Thyroid gland (tissue), 4 donors: ENCODE measurements at regions of chr2 and their contacts with region 1.

Region 1: GRCh38 chr2:233053928-233054784 is 6.0 kb upstream of the INPP5D start:
- DNase-seq: peak; percentile 52 to 60
- H3K4me3 ChIP-seq: no peak overlapping the region
- H3K27ac ChIP-seq: no peak overlapping the region
- H3K4me1 ChIP-seq: peaks cover 0 to 10% of the 10 kb centered on the region in 2 donors
- H3K27me3 ChIP-seq: no peaks in the 10 kb centered on the region
- CTCF ChIP-seq: peak; percentile 57 to 94 (median 78)
- POLR2A ChIP-seq: no peak

Region 2: GRCh38 chr2:232609607-232610006 is 444.5 kb before region 1 on chr2:
- intact Hi-C with region 1: loop called (anchors 5 kb)
- DNase-seq: no peak
- H3K4me3 ChIP-seq: no peak overlapping the region
- H3K27ac ChIP-seq: no peak overlapping the region
- H3K4me1 ChIP-seq: no peaks in the 10 kb centered on the region
- H3K27me3 ChIP-seq: no peaks in the 10 kb centered on the region
- CTCF ChIP-seq: no peak
- POLR2A ChIP-seq: no peak

Region 3: GRCh38 chr2:233100192-233100998 is 46.2 kb after region 1 on chr2:
- intact Hi-C with region 1: no loop called
- DNase-seq: no peak
- H3K4me3 ChIP-seq: no peak overlapping the region
- H3K27ac ChIP-seq: no peak overlapping the region
- H3K4me1 ChIP-seq: no peaks in the 10 kb centered on the region
- H3K27me3 ChIP-seq: no peaks in the 10 kb centered on the region
- CTCF ChIP-seq: no peak
- POLR2A ChIP-seq: no peak